CD4-positive, alpha-beta memory T cell (primary cell): ENCODE measurements at regions of chr10 and their contacts with region 1.

Region 1: GRCh38 chr10:22693371-22693784 is 21.0 kb downstream of the PIP4K2A start:
- DNase-seq: peak in 1 of 5 donors; percentile 68
- H3K4me3 ChIP-seq: no peak overlapping the region
- H3K4me3 Mint-ChIP-seq: peak overlapping the region; percentile 31 to 74 (median 62)
- H3K27ac ChIP-seq: peak overlapping the region; percentile 29
- H3K27ac Mint-ChIP-seq: peak overlapping the region; percentile 85 to 97 (median 88)
- H3K4me1 ChIP-seq: peaks cover 99% of the 10 kb centered on the region
- H3K4me1 Mint-ChIP-seq: peaks cover 71 to 95% (median 86%) of the 10 kb centered on the region in 4 donors
- H3K27me3 ChIP-seq: no peaks in the 10 kb centered on the region
- H3K27me3 Mint-ChIP-seq: no peaks in the 10 kb centered on the region

Region 2: GRCh38 chr10:21488246-21488956 is 1205.0 kb before region 1 on chr10:
- CTCF ChIA-PET with region 1: no interaction called
- POLR2A ChIA-PET with region 1: no interaction called
- intact Hi-C with region 1: no loop called
- DNase-seq: no peak
- H3K4me3 ChIP-seq: no peak overlapping the region
- H3K4me3 Mint-ChIP-seq: no peak overlapping the region
- H3K27ac ChIP-seq: no peak overlapping the region
- H3K27ac Mint-ChIP-seq: no peak overlapping the region
- H3K4me1 ChIP-seq: no peaks in the 10 kb centered on the region
- H3K4me1 Mint-ChIP-seq: no peaks in the 10 kb centered on the region
- H3K27me3 ChIP-seq: peaks cover 4% of the 10 kb centered on the region
- H3K27me3 Mint-ChIP-seq: peaks cover 15 to 23% of the 10 kb centered on the region in 2 donors

Region 3: GRCh38 chr10:22676435-22676834 is 16.9 kb before region 1 on chr10:
- CTCF ChIA-PET with region 1: interaction called, 6 read pairs
- POLR2A ChIA-PET with region 1: interaction called, 13 read pairs
- intact Hi-C with region 1: no loop called
- DNase-seq: peak in 1 of 5 donors; percentile 39
- H3K4me3 ChIP-seq: no peak overlapping the region
- H3K4me3 Mint-ChIP-seq: peak overlapping the region in 7 of 8 donors; percentile 9 to 83 (median 71)
- H3K27ac ChIP-seq: peak overlapping the region; percentile 13
- H3K27ac Mint-ChIP-seq: peak overlapping the region; percentile 77 to 97 (median 86)
- H3K4me1 ChIP-seq: peaks cover 97% of the 10 kb centered on the region
- H3K4me1 Mint-ChIP-seq: peaks cover 75 to 97% (median 91%) of the 10 kb centered on the region in 4 donors
- H3K27me3 ChIP-seq: no peaks in the 10 kb centered on the region
- H3K27me3 Mint-ChIP-seq: no peaks in the 10 kb centered on the region

Region 4: DNA sequence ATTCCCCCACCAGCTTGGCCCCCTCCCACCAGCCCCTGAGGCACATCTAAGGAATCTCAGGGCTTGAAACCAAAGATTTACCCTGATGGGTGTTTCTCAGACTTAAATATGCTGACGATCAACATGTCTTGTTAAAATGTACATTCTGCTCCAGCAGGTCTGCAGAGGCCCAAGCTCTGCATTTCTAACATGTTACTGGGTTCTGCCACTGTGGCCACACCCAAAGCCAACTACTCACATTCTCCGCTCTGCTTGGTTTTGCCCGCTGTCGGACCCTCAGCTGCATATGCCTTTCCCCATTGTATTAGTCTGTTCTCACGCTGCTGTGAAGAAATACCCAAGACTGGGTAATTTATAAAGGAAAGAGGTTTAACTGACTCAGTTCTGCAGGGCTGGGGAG is 12.1 kb after region 1 on chr10:
- CTCF ChIA-PET with region 1: interaction called, 5 read pairs
- POLR2A ChIA-PET with region 1: interaction called, 8 read pairs
- intact Hi-C with region 1: loop called (anchors 1 kb)
- DNase-seq: no peak
- H3K4me3 ChIP-seq: no peak overlapping the region
- H3K4me3 Mint-ChIP-seq: peak overlapping the region in 7 of 8 donors; percentile 19 to 62 (median 53)
- H3K27ac ChIP-seq: peak overlapping the region; percentile 2
- H3K27ac Mint-ChIP-seq: peak overlapping the region; percentile 25 to 85 (median 72)
- H3K4me1 ChIP-seq: peaks cover 100% of the 10 kb centered on the region
- H3K4me1 Mint-ChIP-seq: peaks cover 89 to 100% (median 96%) of the 10 kb centered on the region in 4 donors
- H3K27me3 ChIP-seq: no peaks in the 10 kb centered on the region
- H3K27me3 Mint-ChIP-seq: no peaks in the 10 kb centered on the region

Region 5: GRCh38 chr10:22874189-22874854 is 180.9 kb after region 1 on chr10:
- CTCF ChIA-PET with region 1: no interaction called
- POLR2A ChIA-PET with region 1: no interaction called
- intact Hi-C with region 1: no loop called
- DNase-seq: no peak
- H3K4me3 ChIP-seq: no peak overlapping the region
- H3K4me3 Mint-ChIP-seq: no peak overlapping the region
- H3K27ac ChIP-seq: no peak overlapping the region
- H3K27ac Mint-ChIP-seq: no peak overlapping the region
- H3K4me1 ChIP-seq: no peaks in the 10 kb centered on the region
- H3K4me1 Mint-ChIP-seq: peaks cover 0 to 8% (median 6%) of the 10 kb centered on the region in 4 donors
- H3K27me3 ChIP-seq: no peaks in the 10 kb centered on the region
- H3K27me3 Mint-ChIP-seq: peaks cover 1 to 2% of the 10 kb centered on the region in 2 donors

Region 6: GRCh38 chr10:23432166-23432565 is 738.8 kb after region 1 on chr10:
- CTCF ChIA-PET with region 1: no interaction called
- POLR2A ChIA-PET with region 1: no interaction called
- intact Hi-C with region 1: no loop called
- DNase-seq: no peak
- H3K4me3 ChIP-seq: no peak overlapping the region
- H3K4me3 Mint-ChIP-seq: no peak overlapping the region
- H3K27ac ChIP-seq: no peak overlapping the region
- H3K27ac Mint-ChIP-seq: no peak overlapping the region
- H3K4me1 ChIP-seq: no peaks in the 10 kb centered on the region
- H3K4me1 Mint-ChIP-seq: no peaks in the 10 kb centered on the region
- H3K27me3 ChIP-seq: no peaks in the 10 kb centered on the region
- H3K27me3 Mint-ChIP-seq: peaks cover 0 to 1% of the 10 kb centered on the region in 2 donors